ENCODE measurements at regions of chr4 and their contacts with region 1.

Region 1: GRCh38 chr4:148998719-148999118 is 556.5 kb upstream of the NR3C2 start:
- DNase-seq: no peak
- H3K4me3 ChIP-seq: no peak overlapping the region
- CTCF ChIP-seq: peak; percentile 16

Region 2: DNA sequence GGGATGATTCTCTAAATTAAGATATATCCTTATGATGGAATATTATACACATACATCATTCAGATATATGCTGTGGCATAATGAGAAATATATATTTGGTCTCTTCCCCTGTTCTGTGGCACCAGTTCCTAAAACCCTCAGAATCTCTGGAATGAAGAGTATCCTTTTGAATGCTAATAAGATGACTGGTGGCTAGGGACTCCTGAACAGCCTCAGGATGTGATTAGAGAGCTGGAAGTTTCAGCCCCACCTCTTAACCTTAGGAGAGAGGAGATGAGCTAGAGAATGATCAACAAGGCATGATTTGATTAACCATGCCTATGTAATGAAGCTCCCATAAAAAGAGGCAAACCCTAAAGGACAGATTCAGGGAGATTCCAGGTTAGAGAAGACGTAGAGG is 184.9 kb after region 1 on chr4:
- CTCF ChIA-PET with region 1: no interaction called
- POLR2A ChIA-PET with region 1: no interaction called
- DNase-seq: no peak
- H3K4me3 ChIP-seq: no peak overlapping the region
- CTCF ChIP-seq: no peak

Region 3: DNA sequence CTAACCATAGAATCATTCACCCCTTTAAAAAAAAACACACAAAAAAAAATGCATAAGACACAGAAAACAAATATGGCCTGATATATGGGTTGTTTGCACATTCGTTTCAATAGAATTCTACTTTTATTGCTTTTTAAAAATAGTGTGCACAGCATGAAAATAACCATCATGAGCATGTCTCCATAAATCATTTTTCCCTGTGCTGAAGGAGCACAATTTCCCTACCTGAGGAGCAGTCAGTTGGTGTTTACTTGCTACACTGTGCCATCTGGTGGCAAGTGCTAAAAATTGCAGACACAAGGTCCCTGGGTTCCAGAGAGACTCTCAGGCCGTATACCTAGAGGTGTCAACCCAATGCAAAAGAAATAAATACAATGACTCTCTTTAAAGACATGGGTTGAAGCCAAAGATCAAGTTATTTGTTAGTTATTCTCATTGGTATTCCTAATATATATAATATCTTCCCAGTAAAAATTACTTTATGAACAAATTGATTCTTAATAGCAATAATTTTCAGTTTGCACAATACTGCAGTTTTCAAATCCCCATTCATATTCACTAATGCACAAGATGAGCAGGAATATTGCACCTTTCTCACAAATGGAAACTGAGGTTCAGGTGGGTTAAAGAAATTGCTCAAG is 265.5 kb after region 1 on chr4:
- CTCF ChIA-PET with region 1: interaction called, 26 read pairs
- POLR2A ChIA-PET with region 1: no interaction called
- DNase-seq: peak; percentile 5
- H3K4me3 ChIP-seq: no peak overlapping the region
- CTCF ChIP-seq: peak; percentile 68